PC-3 (cell line): ENCODE measurements at regions of chr6 and their contacts with region 1.

Region 1: GRCh38 chr6:16712931-16713484 is 48.3 kb downstream of the ATXN1 start:
- DNase-seq: peak; percentile 92
- ATAC-seq: peak; percentile 64
- H3K4me3 ChIP-seq: peak overlapping the region; percentile 64
- H3K27ac ChIP-seq: peak overlapping the region; percentile 98
- H3K4me1 ChIP-seq: peaks cover 33% of the 10 kb centered on the region
- H3K27me3 ChIP-seq: no peaks in the 10 kb centered on the region
- CTCF ChIP-seq: peak; percentile 72

Region 2: DNA sequence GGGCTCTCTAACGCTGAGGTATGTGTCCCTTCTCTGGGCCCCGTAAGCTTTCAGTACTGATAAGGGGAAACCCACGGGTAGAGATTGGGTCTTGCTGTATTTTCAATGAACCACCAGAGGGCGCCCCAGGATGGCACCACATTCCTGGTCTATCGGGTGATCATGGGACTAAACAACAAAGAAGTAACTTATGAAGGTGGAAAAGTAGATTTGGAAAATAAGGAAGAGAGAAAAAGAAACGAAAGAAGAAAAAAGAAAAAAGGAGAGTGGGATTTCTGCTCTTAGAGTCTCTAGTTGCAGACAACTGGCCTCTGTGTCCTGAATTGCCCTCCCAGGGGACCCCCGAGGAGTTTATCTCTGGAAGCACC is 380.8 kb before region 1 on chr6:
- CTCF ChIA-PET with region 1: interaction called, 3 read pairs
- POLR2A ChIA-PET with region 1: no interaction called
- intact Hi-C with region 1: loop called (anchors 5 kb)
- DNase-seq: peak; percentile 83
- ATAC-seq: peak; percentile 78
- H3K4me3 ChIP-seq: peak overlapping the region; percentile 41; the same call in 1 of the 2 replicates
- H3K27ac ChIP-seq: peak overlapping the region; percentile 8; the same call in 1 of the 2 replicates
- H3K4me1 ChIP-seq: peaks cover 36% of the 10 kb centered on the region
- H3K27me3 ChIP-seq: no peaks in the 10 kb centered on the region
- CTCF ChIP-seq: peak; percentile 95

Region 3: GRCh38 chr6:16514249-16514648 is 198.8 kb before region 1 on chr6:
- CTCF ChIA-PET with region 1: interaction called, 6 read pairs
- POLR2A ChIA-PET with region 1: no interaction called
- intact Hi-C with region 1: loop called (anchors 5 kb)
- DNase-seq: peak; percentile 70
- ATAC-seq: peak; percentile 64
- H3K4me3 ChIP-seq: no peak overlapping the region
- H3K27ac ChIP-seq: no peak overlapping the region
- H3K4me1 ChIP-seq: no peaks in the 10 kb centered on the region
- H3K27me3 ChIP-seq: no peaks in the 10 kb centered on the region
- CTCF ChIP-seq: peak; percentile 71

Region 4: DNA sequence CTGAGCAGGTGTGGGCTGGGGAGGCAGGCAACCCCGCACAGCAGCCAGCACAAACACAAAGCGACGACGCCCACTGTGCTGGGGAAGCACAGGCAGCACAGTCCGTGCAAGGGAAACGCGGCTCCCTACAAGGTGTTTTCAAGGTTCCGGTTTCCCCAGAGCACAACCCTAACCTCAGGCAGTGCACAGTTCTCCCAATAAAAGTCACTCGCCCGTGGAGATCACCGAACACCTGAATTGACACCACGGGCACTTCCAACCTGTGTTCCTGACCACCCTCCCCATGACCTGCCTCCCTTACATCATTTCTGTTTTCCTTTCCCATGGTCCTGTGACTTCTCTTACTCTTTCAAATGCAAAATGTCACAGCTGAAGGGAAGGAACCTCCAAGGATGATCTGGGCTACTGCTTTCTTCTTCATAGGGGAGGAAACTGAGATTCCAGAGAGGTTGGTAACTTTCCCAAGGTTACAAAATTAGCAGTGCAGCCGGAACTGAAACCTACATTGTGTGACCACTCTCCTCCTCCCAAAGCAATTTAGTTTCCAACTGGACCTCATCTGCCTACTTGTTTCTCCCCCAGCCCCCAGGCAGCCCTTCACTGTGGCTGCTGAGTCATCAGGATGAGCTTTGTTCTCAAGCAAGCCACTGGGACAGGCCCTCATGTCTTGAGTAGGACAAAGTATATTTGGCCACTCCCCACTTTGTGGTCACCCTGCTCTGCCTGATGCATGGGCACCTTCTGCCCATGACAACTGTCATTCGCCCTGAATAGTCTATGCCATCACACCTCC is 77.0 kb before region 1 on chr6:
- CTCF ChIA-PET with region 1: no interaction called
- POLR2A ChIA-PET with region 1: no interaction called
- intact Hi-C with region 1: loop called (anchors 5 kb)
- DNase-seq: peak; percentile 91
- ATAC-seq: peak; percentile 76
- H3K4me3 ChIP-seq: peak overlapping the region; percentile 43
- H3K27ac ChIP-seq: peak overlapping the region; percentile 91
- H3K4me1 ChIP-seq: peaks cover 47% of the 10 kb centered on the region
- H3K27me3 ChIP-seq: no peaks in the 10 kb centered on the region
- CTCF ChIP-seq: no peak

Region 5: GRCh38 chr6:16681260-16681873 is 31.6 kb before region 1 on chr6:
- CTCF ChIA-PET with region 1: no interaction called
- POLR2A ChIA-PET with region 1: no interaction called
- intact Hi-C with region 1: loop called (anchors 1 kb)
- DNase-seq: peak; percentile 94
- ATAC-seq: peak; percentile 83
- H3K4me3 ChIP-seq: peak overlapping the region; percentile 11; the same call in 1 of the 2 replicates
- H3K27ac ChIP-seq: peak overlapping the region; percentile 77
- H3K4me1 ChIP-seq: peaks cover 76% of the 10 kb centered on the region
- H3K27me3 ChIP-seq: no peaks in the 10 kb centered on the region
- CTCF ChIP-seq: no peak

Region 6: GRCh38 chr6:16754876-16755275 is 41.9 kb after region 1 on chr6:
- CTCF ChIA-PET with region 1: interaction called, 4 read pairs
- POLR2A ChIA-PET with region 1: interaction called, 11 read pairs
- intact Hi-C with region 1: loop called (anchors 1 kb)
- DNase-seq: peak; percentile 87
- ATAC-seq: peak; percentile 48
- H3K4me3 ChIP-seq: peak overlapping the region; percentile 26; the same call in 1 of the 2 replicates
- H3K27ac ChIP-seq: peak overlapping the region; percentile 98
- H3K4me1 ChIP-seq: peaks cover 84% of the 10 kb centered on the region
- H3K27me3 ChIP-seq: no peaks in the 10 kb centered on the region
- CTCF ChIP-seq: no peak

Region 7: DNA sequence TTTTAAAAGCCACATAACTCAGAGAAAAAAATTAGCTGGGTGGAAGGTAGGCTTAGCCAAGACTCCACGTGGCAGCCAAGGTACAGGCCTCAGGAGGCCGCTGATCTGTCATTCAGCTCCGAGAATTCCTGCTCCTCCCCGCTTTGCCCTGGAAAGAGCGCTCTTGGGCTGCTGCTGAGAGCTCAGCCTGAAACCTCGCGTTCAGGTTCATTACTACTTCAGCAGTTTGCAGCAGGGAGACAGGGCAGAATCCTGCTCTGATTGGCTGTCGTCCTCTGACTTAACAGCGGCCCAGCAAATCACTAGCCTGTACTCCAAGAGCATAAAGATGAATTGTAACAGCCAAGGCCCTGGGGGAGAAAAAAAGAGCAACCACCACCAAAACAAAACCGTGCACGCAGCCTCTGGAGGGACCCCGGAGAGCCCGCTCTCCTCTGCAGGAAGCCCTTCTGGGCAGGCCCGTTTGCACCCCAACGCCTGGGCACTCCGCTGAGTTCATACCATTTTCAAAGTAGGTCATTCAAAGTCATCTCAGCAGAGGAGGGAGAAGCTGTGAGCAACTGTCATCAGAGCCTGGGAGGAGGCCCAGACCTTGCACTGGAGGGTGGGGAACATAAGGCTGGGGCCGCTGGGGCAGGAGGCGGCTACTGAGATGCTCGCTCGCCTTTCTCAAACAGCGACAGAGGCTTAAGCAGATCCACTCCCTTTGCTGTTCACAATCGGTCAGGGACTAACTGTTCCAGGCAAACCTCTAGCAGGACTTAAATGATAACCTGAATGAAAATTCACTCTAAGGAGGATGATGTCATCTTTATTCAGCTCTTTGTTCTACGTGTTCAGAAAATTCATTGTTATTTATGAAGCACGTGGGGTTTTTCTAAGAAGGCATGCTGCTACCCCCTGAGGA is 90.5 kb after region 1 on chr6:
- CTCF ChIA-PET with region 1: no interaction called
- POLR2A ChIA-PET with region 1: no interaction called
- intact Hi-C with region 1: no loop called
- DNase-seq: no peak
- ATAC-seq: no peak
- H3K4me3 ChIP-seq: no peak overlapping the region
- H3K27ac ChIP-seq: no peak overlapping the region
- H3K4me1 ChIP-seq: peaks cover 41% of the 10 kb centered on the region
- H3K27me3 ChIP-seq: no peaks in the 10 kb centered on the region
- CTCF ChIP-seq: no peak